ENCODE measurements at regions of chr15 and their contacts with region 1.

Region 1: GRCh38 chr15:56464893-56465520 is at the start of gene MNS1:
- DNase-seq: peak; percentile 89
- ATAC-seq: peak; percentile 99
- H3K4me3 Mint-ChIP-seq: peak within 1 kb of the TSS; percentile 88
- H3K27ac Mint-ChIP-seq: no peak within 1 kb of the TSS
- H3K4me1 Mint-ChIP-seq: no peaks in the 10 kb centered on the region
- H3K27me3 Mint-ChIP-seq: peaks cover 39% of the 10 kb centered on the region
- CTCF ChIP-seq: no peak
- total RNA-seq, gene MNS1: 4.2 to 5.5 TPM (median 4.4 TPM) in 3 replicates

Region 2: DNA sequence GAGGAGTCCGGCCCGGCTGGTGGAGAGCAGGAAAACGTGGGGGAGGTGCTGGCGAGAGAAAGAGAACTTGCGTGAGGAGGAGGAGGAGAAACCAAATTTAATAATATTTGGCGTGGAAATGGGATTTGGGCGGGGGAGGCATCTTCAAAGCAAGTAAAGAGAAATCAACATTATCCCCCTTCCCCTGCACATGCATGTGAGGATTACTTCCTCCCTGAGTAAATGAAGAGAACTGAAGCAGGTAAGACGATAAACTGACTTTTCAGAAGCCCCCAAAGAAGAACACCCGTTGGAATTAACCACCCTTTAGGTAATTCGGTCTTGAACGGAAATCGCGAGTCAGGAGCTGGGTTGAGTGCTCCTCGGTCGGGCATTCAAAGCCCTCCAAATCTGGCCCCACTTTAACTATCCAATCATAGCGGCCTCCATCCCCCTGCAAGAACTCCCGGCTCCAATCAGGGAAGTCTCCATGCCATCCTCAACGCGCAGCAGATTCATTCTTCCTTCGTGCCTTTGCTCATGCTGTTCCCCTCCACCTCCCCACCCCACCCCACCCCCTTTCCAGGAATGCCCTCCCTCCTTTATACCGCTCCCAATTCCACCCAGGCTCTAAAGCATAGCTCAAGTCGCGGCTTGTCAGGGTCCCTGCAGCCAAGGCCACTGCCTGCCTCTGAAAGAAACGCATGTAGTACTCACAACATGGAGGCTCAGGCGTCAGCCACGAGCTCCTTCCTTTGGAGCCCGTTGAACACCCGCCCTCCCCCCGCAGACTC is 220.8 kb before region 1 on chr15:
- CTCF ChIA-PET with region 1: interaction called, 12 read pairs
- POLR2A ChIA-PET with region 1: interaction called, 3 read pairs
- DNase-seq: peak; percentile 46
- ATAC-seq: peak; percentile 74
- H3K4me3 Mint-ChIP-seq: peak overlapping the region; percentile 83
- H3K27ac Mint-ChIP-seq: peak overlapping the region; percentile 98
- H3K4me1 Mint-ChIP-seq: peaks cover 43% of the 10 kb centered on the region
- H3K27me3 Mint-ChIP-seq: no peaks in the 10 kb centered on the region
- CTCF ChIP-seq: no peak

Region 3: DNA sequence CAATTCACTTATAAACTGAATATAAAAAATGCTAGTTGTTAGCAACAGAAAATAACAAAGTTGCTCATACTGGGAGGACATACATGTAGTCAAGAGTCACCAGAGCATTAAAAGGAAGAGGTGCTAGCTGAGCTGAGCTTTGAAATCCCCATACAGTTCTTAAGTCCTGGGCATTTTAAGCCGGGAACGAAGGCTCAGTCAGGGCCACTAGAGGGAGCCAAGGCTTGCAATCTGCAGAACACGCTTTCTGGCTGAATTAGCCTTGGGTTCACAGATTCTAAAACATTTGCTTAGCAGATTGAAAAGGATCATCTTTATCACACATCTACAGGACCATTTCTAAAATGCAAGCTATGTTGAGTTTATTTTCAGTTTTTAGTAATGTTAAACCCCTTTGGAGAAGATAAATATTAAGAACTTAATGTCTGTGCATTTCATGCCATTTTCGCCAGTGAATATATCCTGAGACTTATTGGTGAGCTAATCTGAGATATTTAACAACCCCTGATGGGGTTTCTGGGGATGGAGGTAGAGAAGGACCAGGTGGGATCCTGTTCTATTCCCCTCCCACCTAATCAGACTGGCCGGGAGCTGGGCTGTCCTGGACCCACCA is 26.2 kb after region 1 on chr15:
- CTCF ChIA-PET with region 1: interaction called, 14 read pairs
- POLR2A ChIA-PET with region 1: interaction called, 3 read pairs
- DNase-seq: peak; percentile 70
- ATAC-seq: peak; percentile 89
- H3K4me3 Mint-ChIP-seq: no peak overlapping the region
- H3K27ac Mint-ChIP-seq: no peak overlapping the region
- H3K4me1 Mint-ChIP-seq: no peaks in the 10 kb centered on the region
- H3K27me3 Mint-ChIP-seq: no peaks in the 10 kb centered on the region; the same call in 1 of the 2 replicates
- CTCF ChIP-seq: peak; percentile 65

Measured in WTC11 (cell line).